Heart right ventricle (tissue), 16 donors: ENCODE measurements at regions of chr9 and their contacts with region 1.

Region 1: DNA sequence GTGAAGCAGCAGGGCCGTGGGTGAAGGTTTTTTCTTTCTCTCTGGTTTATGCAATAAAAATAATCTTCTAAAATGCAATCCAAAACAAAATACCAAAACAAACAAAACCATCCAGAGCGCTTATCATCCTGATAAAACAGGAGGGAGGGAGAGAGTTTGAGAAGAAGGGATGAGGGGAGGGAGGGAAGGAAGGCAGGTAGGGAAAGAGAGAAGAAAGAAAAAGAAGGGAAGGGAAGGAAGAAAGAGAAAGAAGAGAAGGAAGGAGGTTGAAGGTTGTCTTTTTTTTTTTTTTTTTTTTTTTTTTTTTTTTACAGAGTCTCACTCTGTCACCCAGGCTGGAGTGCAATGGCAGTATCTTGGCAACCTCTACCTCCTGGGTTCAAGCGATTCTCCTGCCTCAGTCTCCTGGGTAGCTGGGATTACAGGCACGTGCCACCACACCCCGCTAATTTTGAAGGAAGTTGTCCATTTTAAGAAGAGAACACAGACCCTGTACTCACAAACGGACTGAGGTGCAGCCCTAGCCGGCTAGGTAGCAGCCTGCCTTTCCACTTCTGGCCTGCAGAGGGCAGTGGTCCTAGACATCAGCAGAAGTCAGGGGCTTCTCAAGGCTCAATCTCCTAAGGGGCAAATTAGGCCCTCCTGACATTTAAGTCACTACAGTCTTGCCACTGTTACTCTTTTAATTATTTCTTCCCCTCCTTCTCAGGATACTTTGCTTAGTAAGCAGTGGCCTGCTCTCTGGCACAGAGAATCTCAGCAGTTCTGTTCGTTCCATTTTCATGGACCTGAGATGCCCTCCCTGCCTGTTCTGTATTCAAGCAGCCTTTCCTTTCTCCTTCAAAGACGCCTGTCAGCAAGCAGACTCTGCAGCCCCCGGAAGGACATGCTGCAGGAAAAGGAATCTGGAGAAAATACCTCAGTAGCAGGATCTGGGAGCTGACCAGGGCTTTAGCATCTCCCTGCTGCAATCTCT is 76.4 kb downstream of the EPB41L4B start:
- DNase-seq: peak; percentile 52 to 69
- ATAC-seq: peak; percentile 71 to 91 (median 86)
- H3K4me3 ChIP-seq: no peak overlapping the region
- H3K27ac ChIP-seq: no peak overlapping the region
- H3K4me1 ChIP-seq: peaks cover 0 to 20% (median 6%) of the 10 kb centered on the region in 9 donors
- H3K27me3 ChIP-seq: peaks cover 0 to 20% (median 0%) of the 10 kb centered on the region in 7 donors
- CTCF ChIP-seq: peak; percentile 79 to 94 (median 92)

Region 2: GRCh38 chr9:109311731-109312130 is 67.3 kb after region 1 on chr9:
- intact Hi-C with region 1: loop called in 5 of 10 experiments (anchors 5 to 10 kb)
- DNase-seq: no peak
- ATAC-seq: no peak
- H3K4me3 ChIP-seq: no peak overlapping the region
- H3K27ac ChIP-seq: no peak overlapping the region
- H3K4me1 ChIP-seq: peaks cover 0 to 47% (median 21%) of the 10 kb centered on the region in 9 donors
- H3K27me3 ChIP-seq: peaks cover 0 to 38% (median 20%) of the 10 kb centered on the region in 7 donors
- CTCF ChIP-seq: no peak

Region 3: DNA sequence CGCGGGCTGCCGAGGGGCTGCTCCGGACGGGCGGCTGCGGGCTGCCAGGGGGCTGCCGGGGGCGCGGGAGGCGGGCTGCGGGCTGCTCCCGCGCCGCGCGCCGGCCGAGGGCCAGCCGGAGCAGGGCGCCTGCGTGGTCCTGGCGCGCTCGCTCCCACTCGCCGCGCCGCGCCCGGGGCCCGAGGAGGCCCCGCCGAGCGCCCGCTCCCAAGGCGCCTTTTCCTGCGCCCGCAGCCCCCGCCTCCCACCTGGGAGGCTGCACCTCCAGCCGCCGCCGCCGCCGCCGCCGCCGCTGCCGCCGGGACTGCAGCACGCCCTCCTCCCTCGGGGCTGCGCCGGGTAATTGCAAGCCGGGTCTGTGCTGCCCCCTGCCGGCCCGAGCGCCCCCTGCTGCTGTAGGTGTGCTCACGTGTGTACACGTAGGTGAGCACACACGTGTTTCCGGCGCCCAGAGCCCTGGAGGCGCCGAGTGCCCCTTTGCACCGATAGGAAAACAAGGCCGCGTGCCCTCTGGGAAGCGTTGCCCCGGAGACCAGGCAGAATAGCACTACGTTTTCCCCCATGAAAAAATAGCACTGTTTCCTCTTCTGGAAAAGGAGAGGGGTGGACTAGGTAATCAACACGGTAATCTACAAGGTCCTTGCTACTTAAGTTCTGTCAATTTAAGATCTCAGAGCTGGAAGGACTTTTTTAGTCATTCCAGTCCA is 76.5 kb after region 1 on chr9 and contains the start of gene EPB41L4B:
- intact Hi-C with region 1: loop called (anchors 2 to 10 kb)
- DNase-seq: peak; percentile 81 to 85
- ATAC-seq: peak; percentile 79 to 94 (median 90)
- H3K4me3 ChIP-seq: peak within 1 kb of the TSS; percentile 18 to 54 (median 48)
- H3K27ac ChIP-seq: no peak within 1 kb of the TSS
- H3K4me1 ChIP-seq: peaks cover 2 to 24% (median 10%) of the 10 kb centered on the region in 9 donors
- H3K27me3 ChIP-seq: peaks cover 0 to 71% (median 36%) of the 10 kb centered on the region in 7 donors
- CTCF ChIP-seq: peak; percentile 73 to 92 (median 90)
- total RNA-seq, gene EPB41L4B: 2.4 to 15.2 (median 4.7) TPM

Region 4: DNA sequence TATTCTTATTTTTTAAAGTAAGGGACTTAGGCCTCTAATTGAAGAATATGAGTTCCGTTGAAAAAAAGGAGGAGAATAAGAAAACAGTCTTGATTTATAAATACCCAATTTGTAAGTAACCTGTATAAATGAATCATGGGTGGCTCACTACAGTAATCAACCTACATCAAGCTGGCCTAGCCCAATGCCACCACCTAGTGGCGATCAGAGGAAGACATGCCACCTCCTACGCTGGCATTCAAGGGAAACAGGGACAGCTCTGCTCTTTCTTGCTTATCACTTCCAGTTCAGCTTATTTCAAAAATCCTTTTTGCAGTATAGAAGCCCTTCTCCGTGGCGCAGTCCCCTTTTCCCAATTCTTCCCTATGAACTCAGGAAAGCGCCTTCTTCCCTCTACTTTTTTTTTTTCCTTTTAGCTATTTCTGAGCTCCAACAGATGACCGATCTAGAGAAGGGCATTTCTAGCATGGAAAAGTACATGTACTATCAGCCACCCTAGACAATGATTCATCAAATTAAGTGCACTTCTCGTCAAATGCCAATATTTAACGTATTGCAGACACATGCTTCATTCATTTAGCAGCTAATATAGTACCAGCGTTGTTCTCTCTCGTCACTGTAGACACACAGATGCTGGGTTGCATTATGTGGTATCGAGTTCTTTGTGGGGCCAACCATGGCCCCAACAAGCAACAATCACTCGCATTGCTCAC is 225.4 kb after region 1 on chr9:
- intact Hi-C with region 1: loop called in 1 of 10 experiments (anchors 5 kb)
- DNase-seq: peak; percentile 48 to 66
- ATAC-seq: peak; percentile 74 to 87 (median 84)
- H3K4me3 ChIP-seq: no peak overlapping the region
- H3K27ac ChIP-seq: peak overlapping the region in 3 of 10 donors; percentile 23 to 37 (median 24)
- H3K4me1 ChIP-seq: peaks cover 0 to 43% (median 17%) of the 10 kb centered on the region in 9 donors
- H3K27me3 ChIP-seq: peaks cover 0 to 52% (median 0%) of the 10 kb centered on the region in 7 donors
- CTCF ChIP-seq: peak; percentile 69 to 94 (median 90)

Region 5: GRCh38 chr9:109520478-109521132 is 276.2 kb after region 1 on chr9:
- intact Hi-C with region 1: loop called in 3 of 10 experiments (anchors 5 to 10 kb)
- DNase-seq: peak in 1 of 2 donors; percentile 65
- ATAC-seq: peak; percentile 73 to 93 (median 86)
- H3K4me3 ChIP-seq: no peak overlapping the region
- H3K27ac ChIP-seq: no peak overlapping the region
- H3K4me1 ChIP-seq: no peaks in the 10 kb centered on the region
- H3K27me3 ChIP-seq: peaks cover 0 to 5% (median 0%) of the 10 kb centered on the region in 7 donors
- CTCF ChIP-seq: peak; percentile 73 to 91 (median 83)